ENCODE measurements at regions of chr13 and their contacts with region 1.

Region 1: GRCh38 chr13:60538566-60538965 is 141.5 kb downstream of the TDRD3 start:
- DNase-seq: peak; percentile 19
- ATAC-seq: peak; percentile 49; the same call in 1 of the 2 replicates
- H3K4me3 ChIP-seq: no peak overlapping the region
- H3K27ac ChIP-seq: no peak overlapping the region
- H3K4me1 ChIP-seq: 0 out of 2 replicates have a peak, but pooled peaks cover 7% of the 10 kb centered on the region
- H3K27me3 ChIP-seq: no peaks in the 10 kb centered on the region
- CTCF ChIP-seq: no peak

Region 2: GRCh38 chr13:60572003-60572798 is 33.6 kb after region 1 on chr13:
- CTCF ChIA-PET with region 1: no interaction called
- POLR2A ChIA-PET with region 1: no interaction called
- intact Hi-C with region 1: loop called (anchors 5 kb)
- DNase-seq: peak; percentile 80
- ATAC-seq: peak; percentile 97
- H3K4me3 ChIP-seq: no peak overlapping the region
- H3K27ac ChIP-seq: peak overlapping the region; percentile 50
- H3K4me1 ChIP-seq: peaks cover 13% of the 10 kb centered on the region
- H3K27me3 ChIP-seq: no peaks in the 10 kb centered on the region
- CTCF ChIP-seq: no peak